Left lung (tissue), 14 donors: ENCODE measurements at regions of chr7 and their contacts with region 1.

Region 1: GRCh38 chr7:135801045-135801693 is 52.6 kb upstream of the FAM180A start:
- DNase-seq: peak in 2 of 4 donors; percentile 56 to 68
- ATAC-seq: peak; percentile 75
- H3K4me3 ChIP-seq: no peak overlapping the region
- H3K27ac ChIP-seq: no peak overlapping the region
- H3K4me1 ChIP-seq: peaks cover 0 to 8% of the 10 kb centered on the region in 2 donors
- H3K27me3 ChIP-seq: peaks cover 0 to 18% of the 10 kb centered on the region in 2 donors
- CTCF ChIP-seq: peak; percentile 57 to 60

Region 2: DNA sequence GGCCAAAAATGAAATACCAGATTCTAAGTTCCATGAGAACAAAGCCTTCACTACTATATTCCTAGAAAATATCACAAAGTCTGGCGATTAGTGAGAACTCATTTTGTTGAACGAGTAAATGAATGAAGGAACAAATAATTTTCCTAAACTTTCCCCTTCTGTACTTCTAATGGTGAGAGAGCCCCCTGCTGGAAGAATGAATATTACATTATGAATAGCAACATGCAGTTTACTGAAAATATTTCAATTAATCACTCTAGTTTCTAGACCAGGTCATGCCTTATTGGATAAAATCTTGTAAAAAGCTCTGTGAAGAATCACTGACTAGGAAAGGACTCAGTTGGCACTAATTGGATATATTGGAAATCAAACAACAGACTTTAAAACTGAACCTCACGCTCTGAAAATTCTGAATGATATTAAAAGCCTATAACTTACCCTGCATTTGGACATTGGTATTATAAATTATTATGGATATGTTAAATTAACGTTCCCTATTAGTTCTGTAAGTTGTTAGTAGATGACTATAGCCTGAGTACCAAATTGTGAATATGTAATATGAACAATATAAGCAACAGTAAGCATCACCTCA is 208.4 kb after region 1 on chr7:
- intact Hi-C with region 1: loop called (anchors 2 to 10 kb)
- DNase-seq: peak in 2 of 4 donors; percentile 37 to 55
- ATAC-seq: peak; percentile 47
- H3K4me3 ChIP-seq: no peak overlapping the region
- H3K27ac ChIP-seq: no peak overlapping the region
- H3K4me1 ChIP-seq: no peaks in the 10 kb centered on the region
- H3K27me3 ChIP-seq: peaks cover 0 to 2% of the 10 kb centered on the region in 2 donors
- CTCF ChIP-seq: peak; percentile 54 to 65